Heart right ventricle (tissue), 16 donors: ENCODE measurements at regions of chr22 and their contacts with region 1.

Region 1: DNA sequence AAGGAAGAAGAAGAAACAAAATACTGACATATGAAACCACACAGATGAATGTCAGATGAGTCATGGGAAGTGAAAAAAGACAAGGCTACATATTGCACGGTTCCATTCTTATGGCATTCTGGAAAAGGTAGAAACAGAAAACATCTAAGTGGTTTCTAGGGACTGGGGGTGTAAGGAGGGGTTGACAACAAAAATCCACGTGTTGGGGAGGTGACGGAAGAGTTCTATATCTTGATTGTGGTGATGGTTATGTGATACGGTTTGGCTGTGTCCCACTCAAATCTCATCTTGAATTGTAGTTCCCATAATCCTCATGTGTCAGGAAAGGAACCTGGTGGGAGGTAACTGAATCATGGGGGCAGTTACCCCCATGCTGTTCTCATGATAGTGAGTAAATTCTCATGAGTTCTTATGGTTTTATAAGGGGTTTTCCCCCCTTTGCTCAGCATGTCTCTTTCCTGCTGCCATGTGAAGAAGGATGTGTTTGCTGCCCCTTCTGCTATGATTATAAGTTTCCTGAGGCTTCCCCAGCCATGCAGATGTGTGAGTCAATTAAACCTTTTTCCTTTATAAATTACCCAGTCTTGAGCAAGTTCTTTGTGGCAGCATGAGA is 6.4 kb upstream of the ARFGAP3 start:
- DNase-seq: no peak
- ATAC-seq: no peak
- H3K4me3 ChIP-seq: no peak overlapping the region
- H3K27ac ChIP-seq: peak overlapping the region in 1 of 10 donors; percentile 0
- H3K4me1 ChIP-seq: peaks cover under 1 to 23% (median 4%) of the 10 kb centered on the region in 9 donors
- H3K27me3 ChIP-seq: no peaks in the 10 kb centered on the region
- CTCF ChIP-seq: no peak

Region 2: DNA sequence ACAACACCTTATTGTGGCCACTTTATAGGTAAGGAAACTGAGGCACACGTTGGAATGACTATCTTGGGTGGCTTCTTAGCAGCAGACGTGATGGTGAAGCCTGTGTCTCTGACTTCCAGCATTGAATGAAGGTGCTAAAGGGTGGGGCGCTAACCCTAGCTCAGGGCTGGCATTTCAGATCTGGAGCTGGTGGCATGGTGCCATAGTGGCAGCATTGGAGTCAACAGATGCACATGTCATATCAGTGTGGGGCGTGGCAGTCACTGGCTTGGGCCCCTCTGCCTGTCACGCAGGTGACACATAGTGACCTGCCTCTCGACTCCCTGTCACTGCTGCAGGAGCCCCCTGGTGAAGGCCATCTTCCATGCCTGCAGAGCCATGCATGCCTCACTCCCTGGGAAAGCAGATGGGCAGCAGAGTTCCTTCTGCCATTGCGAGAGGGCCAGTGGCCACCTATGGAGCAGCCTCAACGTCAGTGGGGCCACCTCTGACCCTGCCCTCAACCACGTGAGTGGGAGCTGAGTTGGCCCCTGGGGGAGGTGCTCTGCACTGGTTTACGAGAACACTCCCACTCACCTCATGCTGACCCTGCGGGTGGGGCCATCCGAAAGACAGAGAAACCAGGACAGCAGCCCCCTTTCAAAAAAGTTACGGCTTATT is 963.3 kb before region 1 on chr22:
- intact Hi-C with region 1: no loop called
- DNase-seq: peak in 1 of 2 donors; percentile 61
- ATAC-seq: peak in 7 of 8 donors; percentile 30 to 71 (median 43)
- H3K4me3 ChIP-seq: no peak overlapping the region
- H3K27ac ChIP-seq: peak overlapping the region in 6 of 10 donors; percentile 17 to 79 (median 71)
- H3K4me1 ChIP-seq: peaks cover 0 to 51% (median 24%) of the 10 kb centered on the region in 9 donors
- H3K27me3 ChIP-seq: no peaks in the 10 kb centered on the region
- CTCF ChIP-seq: no peak

Region 3: GRCh38 chr22:42544686-42545085 is 318.8 kb before region 1 on chr22:
- intact Hi-C with region 1: no loop called
- DNase-seq: no peak
- ATAC-seq: peak in 4 of 8 donors; percentile 15 to 59 (median 44)
- H3K4me3 ChIP-seq: no peak overlapping the region
- H3K27ac ChIP-seq: no peak overlapping the region
- H3K4me1 ChIP-seq: peaks cover 0 to 4% (median 0%) of the 10 kb centered on the region in 9 donors
- H3K27me3 ChIP-seq: no peaks in the 10 kb centered on the region
- CTCF ChIP-seq: no peak

Region 4: GRCh38 chr22:43036282-43036829 is 172.9 kb after region 1 on chr22:
- intact Hi-C with region 1: loop called in 5 of 10 experiments (anchors 1 to 10 kb)
- DNase-seq: peak; percentile 75
- ATAC-seq: peak; percentile 83 to 96 (median 93)
- H3K4me3 ChIP-seq: peak overlapping the region in 2 of 10 donors; percentile 13 to 20
- H3K27ac ChIP-seq: peak overlapping the region in 6 of 10 donors; percentile 25 to 60 (median 44)
- H3K4me1 ChIP-seq: peaks cover 0 to 24% (median 7%) of the 10 kb centered on the region in 9 donors
- H3K27me3 ChIP-seq: no peaks in the 10 kb centered on the region
- CTCF ChIP-seq: no peak

Region 5: GRCh38 chr22:43088979-43089717 is 225.7 kb after region 1 on chr22 and contains the start of gene TTLL1:
- intact Hi-C with region 1: loop called in 3 of 10 experiments (anchors 1 to 10 kb)
- DNase-seq: peak; percentile 88 to 91
- ATAC-seq: peak; percentile 91 to 96 (median 95)
- H3K4me3 ChIP-seq: peak within 1 kb of the TSS; percentile 51 to 100 (median 80)
- H3K27ac ChIP-seq: peak within 1 kb of the TSS in 9 of 10 donors; percentile 40 to 83 (median 71)
- H3K4me1 ChIP-seq: peaks cover 0 to 37% (median 15%) of the 10 kb centered on the region in 9 donors
- H3K27me3 ChIP-seq: no peaks in the 10 kb centered on the region
- CTCF ChIP-seq: peak in 3 of 9 donors; percentile 6 to 27 (median 14)
- total RNA-seq, gene TTLL1: 7.2 to 14.5 (median 11.0) TPM